ENCODE measurements at regions of chr17 and their contacts with region 1.

Region 1: DNA sequence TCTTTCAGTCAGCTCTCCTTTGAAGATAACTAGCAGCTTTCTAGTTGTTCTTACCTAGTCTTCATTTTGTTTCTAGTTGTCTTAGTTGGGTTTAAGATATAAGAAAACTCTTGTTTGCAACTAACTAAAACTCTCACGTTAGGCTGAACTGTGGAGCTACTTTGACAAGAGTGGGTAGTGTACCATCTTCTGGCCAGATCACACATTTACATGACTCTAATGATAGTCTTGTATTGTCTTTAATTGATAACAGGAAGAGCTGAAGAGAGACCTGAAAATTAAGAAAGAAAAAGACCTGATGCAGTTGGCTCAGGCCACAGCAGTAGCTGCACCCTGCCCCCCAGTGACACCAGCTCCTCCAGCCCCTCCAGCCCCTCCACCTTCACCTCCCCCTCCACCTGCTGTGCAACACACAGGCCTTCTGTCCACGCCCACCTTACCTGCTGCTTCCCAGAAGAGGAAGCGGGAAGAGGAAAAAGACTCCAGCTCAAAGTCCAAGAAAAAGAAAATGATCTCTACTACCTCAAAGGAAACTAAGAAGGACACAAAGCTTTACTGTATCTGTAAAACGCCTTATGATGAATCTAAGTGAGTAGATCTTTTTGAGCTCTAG is 36.9 kb downstream of the C17orf58 start:
- DNase-seq: no peak
- H3K4me3 ChIP-seq: no peak overlapping the region
- H3K27ac ChIP-seq: no peak overlapping the region
- H3K4me1 ChIP-seq: no peaks in the 10 kb centered on the region
- H3K27me3 ChIP-seq: no peaks in the 10 kb centered on the region
- CTCF ChIP-seq: no peak
- POLR2A ChIP-seq: no peak

Region 2: GRCh38 chr17:67993596-67994361 is 34.4 kb after region 1 on chr17:
- intact Hi-C with region 1: no loop called
- DNase-seq: peak in 4 of 7 donors; percentile 21 to 88 (median 74)
- H3K4me3 ChIP-seq: peak overlapping the region in 3 of 4 donors; percentile 45 to 90 (median 73)
- H3K27ac ChIP-seq: peak overlapping the region; percentile 64 to 97 (median 89)
- H3K4me1 ChIP-seq: peaks cover 15 to 24% of the 10 kb centered on the region in 2 donors
- H3K27me3 ChIP-seq: no peaks in the 10 kb centered on the region
- CTCF ChIP-seq: peak in 1 of 6 experiments; percentile 4
- POLR2A ChIP-seq: peak; percentile 33 to 56

Region 3: GRCh38 chr17:68019675-68020408 is 60.4 kb after region 1 on chr17:
- intact Hi-C with region 1: loop called in 1 of 2 experiments (anchors 10 kb)
- DNase-seq: peak; percentile 95 to 99 (median 96)
- H3K4me3 ChIP-seq: peak overlapping the region in 2 of 4 donors; percentile 60 to 64
- H3K27ac ChIP-seq: peak overlapping the region in 4 of 5 donors; percentile 58 to 89 (median 78)
- H3K4me1 ChIP-seq: peaks cover 0 to 4% of the 10 kb centered on the region in 2 donors
- H3K27me3 ChIP-seq: no peaks in the 10 kb centered on the region
- CTCF ChIP-seq: peak in 5 of 6 experiments; percentile 42 to 83 (median 67)
- POLR2A ChIP-seq: peak; percentile 69 to 81

Measured in adrenal gland (tissue), 19 donors.